Activated naive CD8-positive, alpha-beta T cell treated with anti-CD3 and anti-CD28 coated beads, Interleukin-2, amount 10 ng/mL, durations not matched to agents 7 days and 5 days (primary cell): ENCODE measurements at regions of chr7 and their contacts with region 1.

Region 1: DNA sequence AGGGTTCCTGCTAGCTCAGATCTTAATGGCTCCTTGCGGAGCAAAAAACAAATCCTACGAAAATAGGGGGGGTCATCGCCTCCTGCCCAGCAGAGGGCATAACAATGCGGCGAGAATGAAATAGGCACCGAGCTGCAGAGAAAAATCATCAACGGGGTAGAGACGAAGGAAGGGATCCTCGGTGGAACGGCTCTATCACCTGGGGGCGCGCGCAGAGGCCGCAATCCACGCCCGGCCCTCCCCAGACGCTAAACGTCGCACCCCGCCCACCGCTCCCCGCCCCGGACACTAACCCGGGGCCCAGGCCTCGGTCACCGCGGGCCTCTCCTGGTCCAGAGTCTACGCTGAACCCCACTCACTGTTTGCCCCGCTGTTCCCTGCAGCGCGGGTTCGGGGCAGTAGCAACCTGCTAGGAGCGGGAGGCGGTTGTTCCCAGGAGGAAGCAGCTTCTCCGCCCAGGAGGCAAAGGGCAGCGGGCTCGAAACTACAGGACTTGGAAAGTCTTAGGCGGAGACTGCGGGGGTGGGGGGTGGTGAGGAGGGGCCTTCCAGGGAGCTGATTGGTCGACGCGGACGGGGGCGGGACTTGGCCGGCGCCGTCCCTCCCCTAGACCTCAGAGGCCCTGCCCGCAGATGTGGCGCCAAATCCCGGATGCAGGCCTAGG is at the start of gene TCAF1:
- DNase-seq: peak; percentile 88
- ATAC-seq: peak; percentile 93
- H3K4me3 Mint-ChIP-seq: peak within 1 kb of the TSS; percentile 87
- H3K27ac Mint-ChIP-seq: peak within 1 kb of the TSS; percentile 85
- H3K4me1 Mint-ChIP-seq: peaks cover 21% of the 10 kb centered on the region
- H3K27me3 Mint-ChIP-seq: no peaks in the 10 kb centered on the region
- total RNA-seq, gene TCAF1: 18.2 to 19.6 TPM

Region 2: GRCh38 chr7:143884969-143885559 is 16.7 kb before region 1 on chr7:
- POLR2A ChIA-PET with region 1: interaction called, 10 read pairs
- DNase-seq: peak; percentile 54
- ATAC-seq: peak; percentile 75
- H3K4me3 Mint-ChIP-seq: peak overlapping the region; percentile 77
- H3K27ac Mint-ChIP-seq: no peak overlapping the region
- H3K4me1 Mint-ChIP-seq: peaks cover 13% of the 10 kb centered on the region
- H3K27me3 Mint-ChIP-seq: peaks cover 19% of the 10 kb centered on the region